Activated CD8-positive, alpha-beta memory T cell treated with anti-CD3 and anti-CD28 coated beads, Interleukin-2, amount 10 ng/mL, durations not matched to agents 7 days and 5 days (primary cell): ENCODE measurements at regions of chr5 and their contacts with region 1.

Region 1: GRCh38 chr5:163459922-163460766 is at the starts of genes HMMR and NUDCD2:
- DNase-seq: peak; percentile 97
- ATAC-seq: peak; percentile 86
- H3K4me3 Mint-ChIP-seq: peak within 1 kb of the TSS; percentile 98
- H3K27ac Mint-ChIP-seq: peak within 1 kb of the TSS; percentile 100
- H3K4me1 Mint-ChIP-seq: peaks cover 44% of the 10 kb centered on the region
- H3K27me3 Mint-ChIP-seq: peaks cover 3% of the 10 kb centered on the region
- total RNA-seq, gene HMMR: 82.2 to 87.7 TPM
- total RNA-seq, gene NUDCD2: 42.7 to 43.9 TPM

Region 2: GRCh38 chr5:163437309-163438182 is 22.6 kb before region 1 on chr5 and contains the start of gene CCNG1:
- CTCF ChIA-PET with region 1: interaction called, 19 read pairs
- DNase-seq: peak; percentile 96
- ATAC-seq: peak; percentile 97
- H3K4me3 Mint-ChIP-seq: peak within 1 kb of the TSS; percentile 92
- H3K27ac Mint-ChIP-seq: peak within 1 kb of the TSS; percentile 92
- H3K4me1 Mint-ChIP-seq: peaks cover 37% of the 10 kb centered on the region
- H3K27me3 Mint-ChIP-seq: peaks cover 6% of the 10 kb centered on the region
- total RNA-seq, gene CCNG1: 122 to 144 TPM

Region 3: GRCh38 chr5:163505368-163506094 is 45.4 kb after region 1 on chr5 and contains the start of gene MAT2B:
- CTCF ChIA-PET with region 1: interaction called, 27 read pairs
- DNase-seq: peak; percentile 97
- ATAC-seq: peak; percentile 92
- H3K4me3 Mint-ChIP-seq: peak within 1 kb of the TSS; percentile 85
- H3K27ac Mint-ChIP-seq: peak within 1 kb of the TSS; percentile 93
- H3K4me1 Mint-ChIP-seq: peaks cover 38% of the 10 kb centered on the region
- H3K27me3 Mint-ChIP-seq: no peaks in the 10 kb centered on the region
- total RNA-seq, gene MAT2B: 74.1 to 104 TPM

Region 4: GRCh38 chr5:163809473-163809872 is 349.3 kb after region 1 on chr5:
- CTCF ChIA-PET with region 1: no interaction called
- DNase-seq: no peak
- ATAC-seq: no peak
- H3K4me3 Mint-ChIP-seq: no peak overlapping the region
- H3K27ac Mint-ChIP-seq: no peak overlapping the region
- H3K4me1 Mint-ChIP-seq: no peaks in the 10 kb centered on the region
- H3K27me3 Mint-ChIP-seq: no peaks in the 10 kb centered on the region